AG04449 (cell line): ENCODE measurements at regions of chr2 and their contacts with region 1.

Region 1: DNA sequence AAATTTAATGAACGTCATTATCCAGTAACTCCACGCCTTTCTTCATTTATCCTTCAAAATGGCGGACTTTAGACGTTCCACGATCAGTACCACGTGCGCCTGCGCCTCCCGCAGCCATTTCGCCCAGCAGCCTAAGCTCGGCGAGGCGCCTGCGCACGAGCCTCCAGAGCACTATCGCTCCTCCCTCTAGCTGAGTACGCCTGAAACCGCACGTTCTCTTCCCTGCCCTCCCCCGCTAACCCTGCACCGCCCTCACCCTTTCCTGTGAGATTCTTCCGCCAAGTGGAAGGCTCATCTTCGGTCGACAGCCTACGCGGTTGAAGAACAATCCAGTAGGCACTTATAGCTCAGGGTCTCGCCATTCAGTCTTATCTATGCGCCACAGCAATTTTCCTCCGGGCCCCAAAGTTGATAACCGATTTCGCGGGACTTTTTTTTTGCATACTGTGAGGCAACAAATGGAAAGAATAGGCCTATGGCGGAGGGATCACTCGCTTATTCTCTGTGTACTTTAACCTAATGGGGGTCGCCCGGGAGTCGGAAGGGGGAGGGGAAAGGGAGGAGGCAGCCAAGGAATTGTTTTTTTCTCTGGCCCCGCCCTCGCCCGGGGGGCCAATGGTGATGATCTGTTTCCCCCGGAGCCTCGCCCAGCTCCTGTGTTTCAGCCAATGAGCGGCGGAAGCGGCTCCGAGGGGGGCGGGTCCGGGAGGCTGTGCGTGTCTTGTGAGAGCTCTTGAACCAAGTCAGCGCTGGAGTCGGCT is at the start of gene KDM3A:
- DNase-seq: peak; percentile 97
- H3K4me3 ChIP-seq: peak within 1 kb of the TSS; percentile 85
- CTCF ChIP-seq: no peak

Region 2: DNA sequence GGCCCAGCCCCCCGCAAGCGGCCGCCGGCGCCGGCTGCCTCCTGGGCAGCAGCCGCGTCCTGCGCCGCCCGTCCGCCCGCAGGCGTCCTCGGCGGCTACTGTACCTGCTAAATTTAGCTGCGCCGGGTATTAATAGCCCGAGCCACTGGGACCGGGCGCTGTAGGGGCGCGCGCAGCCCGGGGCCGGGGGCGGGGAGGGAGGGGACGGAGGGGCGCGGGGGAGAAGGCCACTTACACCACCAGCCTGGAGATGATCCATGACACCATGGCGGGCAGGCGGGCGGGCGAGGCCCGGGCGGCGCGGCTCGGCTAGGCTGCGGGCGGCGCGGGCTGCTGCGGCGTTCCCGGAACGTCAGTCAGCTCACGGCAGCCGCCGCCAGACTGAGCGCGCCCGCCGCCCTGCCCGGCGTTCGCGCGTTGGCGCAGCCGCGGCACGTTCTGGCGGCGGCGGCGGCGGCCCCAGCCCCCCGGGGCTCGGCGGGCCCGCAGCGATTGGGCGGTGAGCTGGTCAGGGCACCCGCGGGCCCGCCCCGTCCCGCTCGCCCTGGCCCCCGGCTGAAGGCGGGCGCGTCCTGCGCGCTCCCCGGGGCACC is 103.5 kb before region 1 on chr2 and contains the start of gene REEP1:
- CTCF ChIA-PET with region 1: no interaction called
- POLR2A ChIA-PET with region 1: no interaction called
- DNase-seq: no peak
- H3K4me3 ChIP-seq: peak within 1 kb of the TSS; percentile 23
- CTCF ChIP-seq: no peak

Region 3: GRCh38 chr2:86453836-86454235 is 13.0 kb after region 1 on chr2:
- CTCF ChIA-PET with region 1: interaction called, 4 read pairs
- POLR2A ChIA-PET with region 1: interaction called, 13 read pairs
- DNase-seq: peak; percentile 19
- H3K4me3 ChIP-seq: no peak overlapping the region
- CTCF ChIP-seq: no peak